ENCODE measurements at regions of chr4 and their contacts with region 1.

Region 1: DNA sequence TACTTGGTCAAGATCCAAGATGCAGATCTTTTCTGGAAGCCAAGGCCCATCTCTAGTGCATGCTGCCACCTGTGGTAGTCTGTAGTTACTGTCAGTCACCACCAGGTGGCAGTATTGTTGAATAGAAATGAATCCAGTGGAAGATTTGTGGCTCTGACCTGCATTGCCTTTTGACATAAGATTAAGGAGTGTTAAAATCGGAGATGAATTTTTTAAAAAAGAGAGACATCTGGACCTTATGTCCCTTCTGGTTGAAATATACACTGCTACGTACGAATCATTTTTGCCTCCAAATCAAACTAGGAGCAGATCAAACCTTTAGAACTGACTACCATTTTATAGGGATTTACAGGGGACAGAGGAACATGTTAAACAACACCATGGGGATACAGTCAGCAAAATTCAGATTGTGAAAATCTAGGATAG is 46.9 kb upstream of the RHOH start:
- DNase-seq: peak; percentile 79
- ATAC-seq: peak; percentile 95
- H3K4me3 ChIP-seq: no peak overlapping the region
- H3K27ac ChIP-seq: no peak overlapping the region
- H3K4me1 ChIP-seq: no peaks in the 10 kb centered on the region
- H3K27me3 ChIP-seq: no peaks in the 10 kb centered on the region
- CTCF ChIP-seq: peak; percentile 72 to 85 (median 73)
- EP300 ChIP-seq: no peak
- POLR2A ChIP-seq: no peak
- RAD21 ChIP-seq: peak; percentile 95

Region 2: DNA sequence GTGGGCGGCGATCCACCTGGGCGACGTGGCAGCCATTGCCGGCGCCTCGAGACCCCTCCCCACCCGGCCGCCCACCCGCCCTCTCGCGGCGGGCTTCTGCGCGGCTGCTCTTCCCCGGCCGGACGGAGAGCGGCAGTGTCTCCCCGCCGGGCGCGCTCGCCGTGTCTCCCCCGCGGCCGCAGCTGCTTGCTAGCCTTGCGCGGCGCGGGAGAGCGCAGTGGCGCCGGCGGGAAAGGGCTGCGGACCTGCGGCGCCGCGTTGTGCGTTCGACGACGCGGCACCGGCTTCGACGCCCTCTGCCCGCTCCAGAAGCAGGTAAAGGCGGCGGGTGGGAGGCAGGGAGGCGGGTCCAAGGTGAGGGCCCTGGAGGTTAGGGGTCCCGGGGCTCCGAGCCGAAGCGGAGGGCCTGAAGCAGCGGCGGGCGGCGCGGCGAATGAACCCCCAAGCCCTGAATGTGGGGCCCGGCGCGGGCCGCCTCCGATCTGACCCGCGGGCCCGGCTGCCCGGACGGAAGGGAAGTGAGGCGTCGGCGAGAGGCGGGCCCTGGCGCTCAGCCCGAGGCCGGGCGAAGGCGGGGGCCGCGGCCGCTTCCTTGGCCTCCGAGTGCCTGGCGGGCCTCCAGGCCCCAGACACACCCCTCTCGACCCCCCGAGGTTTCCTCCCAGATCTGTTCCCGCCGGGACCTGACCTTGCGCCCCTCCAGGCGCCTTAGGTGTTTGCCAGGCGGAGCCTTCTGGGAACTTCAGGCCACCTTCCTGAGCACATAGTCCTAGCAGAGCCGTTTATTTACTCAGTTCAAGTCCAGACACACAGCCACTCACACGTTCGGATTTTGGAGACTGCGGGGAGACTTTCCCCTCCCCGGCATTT is 93.0 kb before region 1 on chr4 and contains the start of gene N4BP2:
- CTCF ChIA-PET with region 1: interaction called, 5 read pairs
- POLR2A ChIA-PET with region 1: interaction called, 5 read pairs
- RAD21 ChIA-PET with region 1: interaction called, 4 read pairs
- SMC1A ChIA-PET with region 1: interaction called, 8 read pairs
- in situ Hi-C with region 1: no loop called
- intact Hi-C with region 1: loop called (anchors 2 kb)
- DNase-seq: peak; percentile 5
- ATAC-seq: peak; percentile 80
- H3K4me3 ChIP-seq: peak within 1 kb of the TSS; percentile 83
- H3K27ac ChIP-seq: peak within 1 kb of the TSS; percentile 80
- H3K4me1 ChIP-seq: peaks cover 10% of the 10 kb centered on the region
- H3K27me3 ChIP-seq: no peaks in the 10 kb centered on the region
- CTCF ChIP-seq: peak; percentile 73 to 97 (median 78)
- EP300 ChIP-seq: no peak
- POLR2A ChIP-seq: peak; percentile 80
- RAD21 ChIP-seq: peak; percentile 80
- polyA plus RNA-seq, gene N4BP2: 2.3 to 3.6 TPM

Region 3: DNA sequence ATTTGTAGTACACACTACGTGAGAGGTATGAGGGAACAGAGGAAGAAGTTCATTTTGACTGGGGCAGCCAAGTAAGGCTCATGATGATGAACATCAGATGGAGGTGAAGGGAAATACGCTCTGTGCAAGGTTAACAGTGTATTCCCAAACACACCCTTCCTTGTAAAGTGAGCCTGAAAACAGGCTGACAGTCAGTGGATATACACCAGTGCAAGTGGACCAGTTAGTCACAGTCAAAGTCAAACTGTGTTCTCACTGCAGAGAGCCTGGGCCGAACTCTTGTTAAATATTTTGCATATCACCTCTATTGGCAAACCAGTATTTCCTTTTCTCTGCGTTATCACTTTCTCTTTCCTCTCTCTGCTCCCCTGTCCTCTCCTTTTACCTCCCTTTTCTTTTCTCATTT is 23.5 kb after region 1 on chr4:
- CTCF ChIA-PET with region 1: interaction called, 7 read pairs
- POLR2A ChIA-PET with region 1: interaction called, 5 read pairs
- RAD21 ChIA-PET with region 1: interaction called, 21 read pairs
- SMC1A ChIA-PET with region 1: interaction called, 16 read pairs
- in situ Hi-C with region 1: no loop called
- intact Hi-C with region 1: no loop called
- DNase-seq: no peak
- ATAC-seq: peak; percentile 82
- H3K4me3 ChIP-seq: no peak overlapping the region
- H3K27ac ChIP-seq: peak overlapping the region; percentile 45
- H3K4me1 ChIP-seq: peaks cover 21% of the 10 kb centered on the region
- H3K27me3 ChIP-seq: no peaks in the 10 kb centered on the region
- CTCF ChIP-seq: no peak
- EP300 ChIP-seq: no peak
- POLR2A ChIP-seq: peak; percentile 47
- RAD21 ChIP-seq: no peak

Region 4: GRCh38 chr4:40193016-40193571 is 43.1 kb after region 1 on chr4:
- CTCF ChIA-PET with region 1: interaction called, 20 read pairs
- POLR2A ChIA-PET with region 1: interaction called, 8 read pairs
- RAD21 ChIA-PET with region 1: interaction called, 27 read pairs
- SMC1A ChIA-PET with region 1: interaction called, 95 read pairs
- in situ Hi-C with region 1: no loop called
- intact Hi-C with region 1: no loop called
- DNase-seq: no peak
- ATAC-seq: peak; percentile 40
- H3K4me3 ChIP-seq: peak overlapping the region; percentile 88
- H3K27ac ChIP-seq: peak overlapping the region; percentile 92
- H3K4me1 ChIP-seq: peaks cover 9% of the 10 kb centered on the region
- H3K27me3 ChIP-seq: no peaks in the 10 kb centered on the region
- CTCF ChIP-seq: 0 out of 6 replicates have a peak, but pooled peaks of 1 of the 3 experiments have one; percentile 3
- EP300 ChIP-seq: 0 out of 4 replicates have a peak, but pooled peaks of 1 of the 2 experiments have one; percentile 25
- POLR2A ChIP-seq: peak; percentile 81
- RAD21 ChIP-seq: peak; percentile 17; the same call in 1 of the 2 replicates

Region 5: DNA sequence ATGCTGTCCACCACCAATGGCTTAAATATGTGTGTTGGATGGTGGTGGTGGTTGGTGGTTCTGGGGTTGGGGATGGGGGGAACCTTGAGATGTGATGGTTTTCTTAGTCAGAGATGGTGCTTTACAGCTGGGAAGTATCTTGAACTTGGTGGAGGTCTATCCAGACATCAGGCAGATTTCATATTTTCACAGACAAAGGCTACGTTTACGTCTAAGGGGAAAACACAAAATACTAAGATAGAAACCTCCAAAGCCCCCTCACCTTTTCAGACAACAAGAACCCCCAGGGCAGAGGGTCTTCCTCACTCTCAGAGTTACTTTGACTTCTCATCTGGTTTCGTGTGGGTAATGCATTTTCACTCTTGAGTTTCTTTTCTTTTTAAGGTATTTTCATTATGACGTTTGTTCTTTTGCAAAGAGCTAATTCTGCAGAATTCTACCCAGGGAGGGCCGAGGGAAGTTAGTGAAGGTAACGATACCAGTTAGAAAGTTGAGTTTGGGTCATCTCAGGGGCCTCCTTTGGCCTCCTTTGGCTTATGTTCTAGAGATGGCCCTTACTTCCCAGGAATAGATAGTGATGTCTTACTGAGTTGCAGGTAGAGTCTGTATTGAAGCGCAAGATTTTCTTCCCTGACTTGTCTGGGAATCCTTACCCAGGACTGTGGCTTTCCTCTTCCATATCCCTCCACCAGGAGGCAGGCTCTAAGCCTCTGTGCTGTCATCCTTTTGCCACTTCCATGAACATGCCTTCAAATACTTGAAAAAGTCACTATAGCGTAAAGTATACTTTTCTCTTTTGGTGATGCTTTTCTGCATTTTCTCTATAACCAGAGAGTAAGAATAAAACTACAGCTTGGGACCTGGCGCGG is 78.8 kb after region 1 on chr4:
- CTCF ChIA-PET with region 1: interaction called, 5 read pairs
- POLR2A ChIA-PET with region 1: interaction called, 3 read pairs
- RAD21 ChIA-PET with region 1: interaction called, 9 read pairs
- SMC1A ChIA-PET with region 1: interaction called, 11 read pairs
- in situ Hi-C with region 1: no loop called
- intact Hi-C with region 1: loop called (anchors 2 kb)
- DNase-seq: peak; percentile 77
- ATAC-seq: peak; percentile 56
- H3K4me3 ChIP-seq: peak overlapping the region; percentile 13; the same call in 1 of the 2 replicates
- H3K27ac ChIP-seq: peak overlapping the region; percentile 84
- H3K4me1 ChIP-seq: peaks cover 59% of the 10 kb centered on the region
- H3K27me3 ChIP-seq: no peaks in the 10 kb centered on the region
- CTCF ChIP-seq: peak; percentile 28 to 65 (median 45); a peak in 5 of 6 replicates
- EP300 ChIP-seq: peak in 1 of 2 experiments; percentile 66; a peak in 3 of 4 replicates
- POLR2A ChIP-seq: no peak
- RAD21 ChIP-seq: peak; percentile 44

Region 6: DNA sequence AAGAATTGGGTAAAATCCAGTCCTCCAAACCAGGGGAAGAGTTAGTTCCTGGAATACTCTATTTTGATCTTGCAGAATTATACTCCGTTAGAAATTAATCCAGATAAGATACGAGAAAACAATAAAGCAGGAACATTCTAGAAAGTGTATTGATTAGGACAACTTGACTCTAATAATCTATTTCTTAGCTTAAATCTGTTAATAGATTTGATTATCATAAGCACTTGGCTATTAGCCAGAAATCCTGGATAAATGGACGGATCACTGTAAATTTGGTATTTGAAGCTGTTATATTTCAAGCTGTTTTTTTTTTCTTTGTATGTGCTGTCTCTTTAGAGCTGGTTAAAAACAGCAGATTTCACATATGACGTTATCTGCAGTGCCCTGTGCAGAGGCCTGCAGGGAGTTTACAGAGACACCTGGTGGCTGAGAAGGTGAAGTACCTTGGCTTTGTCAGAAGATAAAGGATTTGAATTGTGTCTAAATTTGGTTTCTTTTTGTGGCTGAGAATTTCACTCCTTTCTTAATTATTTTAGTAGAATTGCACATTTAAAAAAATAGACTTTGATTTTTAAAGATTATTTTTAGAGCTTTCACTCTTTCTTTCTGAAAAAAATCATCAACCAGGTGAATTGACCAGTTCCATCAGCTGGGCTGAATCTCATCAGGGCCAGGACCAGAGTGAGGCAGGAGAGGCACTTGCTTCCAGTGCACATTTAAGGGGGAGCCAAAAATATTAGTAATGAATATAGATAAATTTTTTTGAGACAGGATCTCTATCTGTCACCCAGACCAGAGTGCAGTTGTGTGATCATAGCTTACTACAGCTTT is 175.4 kb after region 1 on chr4:
- CTCF ChIA-PET with region 1: interaction called, 33 read pairs
- POLR2A ChIA-PET with region 1: interaction called, 4 read pairs
- RAD21 ChIA-PET with region 1: interaction called, 19 read pairs
- SMC1A ChIA-PET with region 1: interaction called, 43 read pairs
- in situ Hi-C with region 1: no loop called
- intact Hi-C with region 1: loop called (anchors 2 kb)
- DNase-seq: no peak
- ATAC-seq: peak; percentile 98
- H3K4me3 ChIP-seq: no peak overlapping the region
- H3K27ac ChIP-seq: no peak overlapping the region
- H3K4me1 ChIP-seq: no peaks in the 10 kb centered on the region
- H3K27me3 ChIP-seq: no peaks in the 10 kb centered on the region
- CTCF ChIP-seq: peak; percentile 86 to 94 (median 89)
- EP300 ChIP-seq: no peak
- POLR2A ChIP-seq: no peak
- RAD21 ChIP-seq: peak; percentile 96

Region 7: DNA sequence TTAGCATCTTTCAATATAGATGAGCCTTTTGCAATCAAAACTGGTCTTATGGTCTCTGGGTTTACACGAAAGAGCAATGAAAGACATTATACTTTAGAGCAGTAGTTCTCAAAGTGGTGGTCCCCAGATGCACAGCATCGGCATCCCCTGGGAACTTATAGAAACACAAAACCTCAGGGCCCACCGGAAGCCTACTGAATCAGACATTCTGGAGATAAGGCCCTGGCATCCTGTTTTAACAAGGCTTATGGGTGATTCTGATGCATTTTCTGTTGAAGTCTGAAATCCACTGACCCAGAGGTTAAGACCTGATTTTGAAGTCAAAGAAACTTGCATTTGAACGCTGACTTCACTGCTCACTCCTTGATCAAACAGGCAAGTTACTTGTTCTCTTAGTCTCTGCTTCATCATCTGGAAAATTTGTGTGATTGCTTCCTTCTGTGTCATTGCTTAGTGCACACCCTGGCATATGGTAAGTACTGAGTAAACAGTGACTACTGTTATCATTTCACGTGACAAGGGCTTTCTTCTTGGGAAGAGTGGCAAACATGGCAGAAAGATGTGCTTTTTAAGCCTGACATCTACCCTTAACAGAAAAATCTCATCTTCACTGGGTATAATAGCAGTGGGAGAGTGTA is 199.7 kb after region 1 on chr4:
- CTCF ChIA-PET with region 1: no interaction called
- POLR2A ChIA-PET with region 1: no interaction called
- RAD21 ChIA-PET with region 1: no interaction called
- SMC1A ChIA-PET with region 1: no interaction called
- in situ Hi-C with region 1: no loop called
- intact Hi-C with region 1: no loop called
- DNase-seq: no peak
- ATAC-seq: no peak
- H3K4me3 ChIP-seq: no peak overlapping the region
- H3K27ac ChIP-seq: no peak overlapping the region
- H3K4me1 ChIP-seq: no peaks in the 10 kb centered on the region
- H3K27me3 ChIP-seq: no peaks in the 10 kb centered on the region
- CTCF ChIP-seq: no peak
- EP300 ChIP-seq: no peak
- POLR2A ChIP-seq: no peak
- RAD21 ChIP-seq: no peak

Measured in GM12878 (cell line).